PC-3 (cell line): ENCODE measurements at regions of chr1 and their contacts with region 1.

Region 1: DNA sequence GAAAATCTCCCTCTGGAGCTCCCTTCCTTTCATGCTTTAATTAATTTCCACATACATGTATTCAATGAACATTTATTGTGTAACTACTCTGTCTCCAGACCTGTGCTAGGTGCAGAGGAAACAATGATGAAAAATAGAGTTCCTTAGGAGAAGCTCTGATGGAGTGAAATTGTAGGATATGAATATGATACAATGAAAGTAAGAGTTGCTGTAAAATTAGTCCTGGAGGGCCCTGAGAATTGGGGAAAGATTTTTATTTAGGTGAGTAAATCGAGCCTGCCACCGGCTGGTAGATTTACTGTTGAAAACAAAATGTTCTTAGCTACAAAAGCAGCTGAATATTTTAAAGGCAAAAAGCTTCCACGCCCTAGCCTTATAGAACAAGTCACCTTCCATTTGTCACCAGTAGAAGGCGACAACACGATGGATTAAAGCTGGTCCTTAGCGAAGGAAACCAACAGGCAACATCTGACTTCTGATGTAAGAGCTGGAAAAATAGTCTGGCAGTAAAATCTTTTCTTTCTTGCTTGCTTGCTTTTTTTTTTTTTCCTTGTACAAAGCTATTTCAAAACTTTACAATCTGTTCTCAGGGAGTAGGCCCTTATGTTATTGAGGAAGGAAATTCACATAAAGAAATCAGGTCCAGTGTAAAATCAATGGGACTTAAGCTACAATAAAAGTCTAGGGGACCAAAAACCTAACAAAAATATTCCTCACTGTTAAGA is 82.0 kb upstream of the ROR1 start:
- DNase-seq: peak; percentile 92
- ATAC-seq: peak; percentile 91
- H3K4me3 ChIP-seq: no peak overlapping the region
- H3K27ac ChIP-seq: peak overlapping the region; percentile 60
- H3K4me1 ChIP-seq: peaks cover 10% of the 10 kb centered on the region
- H3K27me3 ChIP-seq: no peaks in the 10 kb centered on the region
- CTCF ChIP-seq: peak; percentile 88

Region 2: GRCh38 chr1:63662056-63662836 is 29.6 kb before region 1 on chr1:
- CTCF ChIA-PET with region 1: interaction called, 18 read pairs
- POLR2A ChIA-PET with region 1: interaction called, 3 read pairs
- intact Hi-C with region 1: loop called (anchors 2 kb)
- DNase-seq: peak; percentile 93
- ATAC-seq: peak; percentile 81
- H3K4me3 ChIP-seq: peak overlapping the region; percentile 41; the same call in 1 of the 2 replicates
- H3K27ac ChIP-seq: peak overlapping the region; percentile 99
- H3K4me1 ChIP-seq: peaks cover 48% of the 10 kb centered on the region
- H3K27me3 ChIP-seq: no peaks in the 10 kb centered on the region
- CTCF ChIP-seq: no peak

Region 3: GRCh38 chr1:63731117-63732043 is 39.5 kb after region 1 on chr1:
- CTCF ChIA-PET with region 1: interaction called, 5 read pairs
- POLR2A ChIA-PET with region 1: no interaction called
- intact Hi-C with region 1: loop called (anchors 5 kb)
- DNase-seq: peak; percentile 99
- ATAC-seq: peak; percentile 87
- H3K4me3 ChIP-seq: peak overlapping the region; percentile 15; the same call in 1 of the 2 replicates
- H3K27ac ChIP-seq: peak overlapping the region; percentile 96
- H3K4me1 ChIP-seq: peaks cover 36% of the 10 kb centered on the region
- H3K27me3 ChIP-seq: no peaks in the 10 kb centered on the region
- CTCF ChIP-seq: no peak

Region 4: GRCh38 chr1:63810936-63811469 is 119.1 kb after region 1 on chr1:
- CTCF ChIA-PET with region 1: no interaction called
- POLR2A ChIA-PET with region 1: interaction called, 12 read pairs
- intact Hi-C with region 1: no loop called
- DNase-seq: no peak
- ATAC-seq: no peak
- H3K4me3 ChIP-seq: no peak overlapping the region
- H3K27ac ChIP-seq: no peak overlapping the region
- H3K4me1 ChIP-seq: peaks cover 4% of the 10 kb centered on the region; the same call in 1 of the 2 replicates
- H3K27me3 ChIP-seq: no peaks in the 10 kb centered on the region
- CTCF ChIP-seq: no peak

Region 5: GRCh38 chr1:63902844-63903589 is 211.2 kb after region 1 on chr1:
- CTCF ChIA-PET with region 1: no interaction called
- POLR2A ChIA-PET with region 1: no interaction called
- intact Hi-C with region 1: no loop called
- DNase-seq: peak; percentile 31
- ATAC-seq: peak; percentile 48; the same call in 1 of the 2 replicates
- H3K4me3 ChIP-seq: no peak overlapping the region
- H3K27ac ChIP-seq: no peak overlapping the region
- H3K4me1 ChIP-seq: peaks cover 9% of the 10 kb centered on the region
- H3K27me3 ChIP-seq: no peaks in the 10 kb centered on the region
- CTCF ChIP-seq: no peak

Region 6: DNA sequence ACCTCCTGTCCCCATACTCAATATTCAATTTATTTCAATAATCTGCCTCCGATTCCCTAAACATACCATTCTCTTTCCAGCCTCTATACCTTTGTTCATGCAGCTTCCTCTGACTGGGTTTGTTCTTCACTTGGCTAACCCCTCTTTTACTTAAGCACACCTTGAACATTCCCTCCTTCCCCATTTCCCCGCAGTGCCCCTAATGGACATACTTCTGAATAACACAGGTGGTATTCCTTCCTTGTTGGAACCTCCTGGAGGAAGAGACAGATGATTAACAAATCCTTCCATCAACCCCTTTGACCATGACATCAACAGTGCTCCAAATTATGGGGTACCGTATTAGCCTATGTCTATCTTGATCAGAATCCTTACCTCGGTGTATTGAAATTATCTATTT is 321.5 kb after region 1 on chr1:
- CTCF ChIA-PET with region 1: no interaction called
- POLR2A ChIA-PET with region 1: no interaction called
- intact Hi-C with region 1: no loop called
- DNase-seq: no peak
- ATAC-seq: no peak
- H3K4me3 ChIP-seq: no peak overlapping the region
- H3K27ac ChIP-seq: no peak overlapping the region
- H3K4me1 ChIP-seq: peaks cover 11% of the 10 kb centered on the region
- H3K27me3 ChIP-seq: no peaks in the 10 kb centered on the region
- CTCF ChIP-seq: no peak

Region 7: DNA sequence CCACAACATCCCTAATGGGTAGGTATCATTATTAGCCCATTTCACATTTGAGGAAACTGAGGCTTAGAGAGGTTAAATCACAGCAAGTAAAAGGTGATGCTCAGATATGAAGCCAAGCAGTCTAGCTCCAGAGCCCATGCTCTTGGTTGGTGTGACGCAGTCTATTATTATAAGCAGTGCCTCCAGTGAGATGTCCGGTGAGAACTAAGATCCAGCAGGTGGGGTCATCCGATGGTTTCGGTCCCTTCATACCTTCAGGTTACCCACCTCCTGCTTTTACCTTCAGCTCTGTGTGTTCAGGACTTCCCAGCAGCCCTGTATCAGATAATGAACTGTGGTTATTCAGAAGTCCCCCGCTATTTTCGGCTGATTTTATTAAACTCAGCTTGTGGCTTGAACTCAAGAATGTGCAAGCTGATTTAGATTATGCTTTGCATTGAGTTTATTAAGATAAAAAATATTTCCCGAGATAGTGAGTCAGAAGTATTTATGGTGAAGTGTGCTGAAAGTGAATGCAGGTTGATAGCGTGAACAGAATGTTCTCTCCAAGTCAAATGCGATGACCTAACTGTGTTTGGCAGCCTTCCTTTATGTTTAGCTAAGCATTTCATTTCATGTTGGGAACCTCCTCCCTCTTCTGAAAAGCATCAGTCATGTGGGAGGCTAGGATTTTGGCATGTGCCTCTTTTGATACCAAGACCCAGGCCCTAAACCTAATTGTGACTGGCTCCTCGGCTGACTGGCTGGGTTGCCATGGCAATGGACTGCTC is 350.7 kb after region 1 on chr1:
- CTCF ChIA-PET with region 1: interaction called, 4 read pairs
- POLR2A ChIA-PET with region 1: no interaction called
- intact Hi-C with region 1: loop called (anchors 10 kb)
- DNase-seq: peak; percentile 96
- ATAC-seq: peak; percentile 55
- H3K4me3 ChIP-seq: peak overlapping the region; percentile 42; the same call in 1 of the 2 replicates
- H3K27ac ChIP-seq: peak overlapping the region; percentile 81
- H3K4me1 ChIP-seq: peaks cover 63% of the 10 kb centered on the region
- H3K27me3 ChIP-seq: no peaks in the 10 kb centered on the region
- CTCF ChIP-seq: peak; percentile 16; the same call in 1 of the 2 replicates

Region 8: DNA sequence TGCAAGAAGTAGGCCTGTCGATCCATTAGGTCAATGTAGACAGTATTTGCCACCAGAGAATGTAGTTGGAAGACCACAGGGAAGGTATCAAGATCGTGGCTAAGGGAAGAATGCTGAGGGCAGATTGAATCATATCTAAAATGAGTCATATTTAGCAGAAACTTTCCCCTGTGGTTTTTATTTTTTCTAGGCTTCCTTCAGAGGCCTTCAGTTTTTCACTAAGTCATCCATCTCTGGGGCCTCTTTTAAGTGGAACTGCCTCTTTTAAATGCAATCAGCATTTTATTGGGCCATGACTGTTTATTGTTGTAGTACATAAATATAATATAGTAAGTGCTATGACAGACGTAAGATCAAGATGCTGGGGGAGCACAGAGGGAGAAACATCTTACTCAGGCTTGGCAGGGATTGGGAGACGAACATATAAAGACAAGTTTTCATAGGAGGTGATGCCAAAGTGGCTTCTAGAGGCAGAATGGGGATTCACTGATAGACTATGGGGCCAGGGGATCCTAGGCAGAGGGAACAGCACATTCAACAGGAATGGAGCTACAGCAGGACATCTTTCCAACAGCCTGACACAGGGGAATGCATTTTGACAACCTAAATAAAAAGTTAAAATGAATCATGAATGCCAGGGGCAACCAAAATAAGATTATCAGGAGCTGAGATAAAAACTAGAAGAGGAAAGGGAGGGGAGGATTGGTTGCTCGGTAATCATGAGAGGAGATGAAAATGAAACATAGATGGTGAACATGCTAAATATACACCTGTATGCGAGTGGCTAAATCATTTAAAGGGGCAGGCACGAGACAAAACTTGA is 531.7 kb after region 1 on chr1:
- CTCF ChIA-PET with region 1: interaction called, 5 read pairs
- POLR2A ChIA-PET with region 1: interaction called, 13 read pairs
- intact Hi-C with region 1: no loop called
- DNase-seq: peak; percentile 87
- ATAC-seq: peak; percentile 76
- H3K4me3 ChIP-seq: peak overlapping the region; percentile 9; the same call in 1 of the 2 replicates
- H3K27ac ChIP-seq: peak overlapping the region; percentile 84
- H3K4me1 ChIP-seq: peaks cover 18% of the 10 kb centered on the region
- H3K27me3 ChIP-seq: no peaks in the 10 kb centered on the region
- CTCF ChIP-seq: no peak